ENCODE measurements at regions of chr3 and their contacts with region 1.

Region 1: GRCh38 chr3:54853573-54854404 is 74.1 kb downstream of the LRTM1 start:
- DNase-seq: peak; percentile 38
- H3K4me3 ChIP-seq: no peak overlapping the region
- H3K27ac ChIP-seq: no peak overlapping the region
- H3K4me1 ChIP-seq: no peaks in the 10 kb centered on the region
- H3K27me3 ChIP-seq: peaks cover 8% of the 10 kb centered on the region
- CTCF ChIP-seq: peak; percentile 75

Region 2: DNA sequence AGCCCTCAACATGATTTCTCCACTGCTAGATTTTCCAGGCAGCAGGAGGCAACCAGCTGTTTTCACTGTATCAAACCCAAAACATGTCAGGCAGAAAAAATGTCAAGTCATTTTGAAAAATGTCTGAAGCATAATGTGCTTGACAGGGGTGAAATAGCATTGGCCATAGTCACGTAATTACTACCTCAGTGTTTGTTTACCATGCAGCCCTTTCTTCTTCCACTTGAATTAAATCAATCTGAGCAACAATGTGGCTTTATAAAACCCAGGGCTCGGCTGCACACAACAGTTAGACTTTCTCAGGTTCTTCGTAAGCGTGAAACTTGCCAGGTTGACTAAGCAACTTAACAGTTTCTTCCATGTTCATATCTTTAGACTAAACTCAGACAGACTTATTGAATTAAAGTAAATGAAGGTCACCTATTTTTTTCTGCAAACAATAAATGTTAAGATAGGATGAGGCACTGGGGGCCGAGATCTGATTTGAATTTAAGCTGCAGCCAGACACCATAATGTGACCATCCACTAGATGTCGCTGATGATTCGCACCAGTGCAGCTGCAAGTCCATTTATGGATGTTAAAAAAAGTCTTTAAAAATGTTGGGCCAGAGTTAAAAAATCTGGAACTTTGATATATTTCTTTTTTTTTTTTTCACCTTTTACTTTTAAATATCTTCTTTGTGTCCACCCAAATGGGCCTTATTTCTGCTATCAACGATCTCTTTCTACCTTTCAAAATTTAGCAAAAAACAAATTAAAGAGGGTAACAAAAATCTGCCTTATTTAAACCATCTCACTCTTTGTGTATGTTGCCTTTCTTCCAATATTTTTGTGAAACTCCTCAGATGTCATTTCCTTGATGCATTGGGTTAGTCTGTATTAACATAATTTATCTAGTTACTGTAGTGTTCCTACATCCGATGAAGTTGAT is 425.6 kb before region 1 on chr3:
- CTCF ChIA-PET with region 1: no interaction called
- POLR2A ChIA-PET with region 1: no interaction called
- intact Hi-C with region 1: loop called (anchors 10 kb)
- DNase-seq: peak; percentile 45
- H3K4me3 ChIP-seq: no peak overlapping the region
- H3K27ac ChIP-seq: no peak overlapping the region
- H3K4me1 ChIP-seq: no peaks in the 10 kb centered on the region
- H3K27me3 ChIP-seq: no peaks in the 10 kb centered on the region
- CTCF ChIP-seq: peak; percentile 73

Region 3: DNA sequence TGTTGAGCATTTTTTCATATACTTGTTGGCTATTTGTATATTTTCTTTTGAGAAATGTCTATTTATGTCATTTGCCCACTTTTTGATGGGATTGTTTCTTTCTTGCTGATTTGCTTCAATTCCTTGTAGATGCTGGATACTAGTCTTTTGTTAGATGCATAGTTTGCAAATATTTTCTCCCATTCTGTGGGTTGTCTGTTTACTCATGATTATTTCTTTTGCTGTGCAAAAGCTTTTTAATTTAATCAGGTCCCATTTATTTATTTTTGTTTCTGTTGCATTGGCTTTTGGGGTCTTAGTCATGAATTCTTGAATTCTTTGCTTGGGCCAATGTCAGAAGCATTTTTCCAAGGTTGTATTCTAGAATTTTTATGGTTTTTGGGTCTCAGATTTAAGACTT is 381.6 kb after region 1 on chr3:
- CTCF ChIA-PET with region 1: no interaction called
- POLR2A ChIA-PET with region 1: no interaction called
- intact Hi-C with region 1: no loop called
- DNase-seq: no peak
- H3K4me3 ChIP-seq: no peak overlapping the region
- H3K27ac ChIP-seq: no peak overlapping the region
- H3K4me1 ChIP-seq: no peaks in the 10 kb centered on the region
- H3K27me3 ChIP-seq: no peaks in the 10 kb centered on the region
- CTCF ChIP-seq: no peak

Region 4: GRCh38 chr3:55897573-55898224 is 1043.9 kb after region 1 on chr3:
- CTCF ChIA-PET with region 1: no interaction called
- POLR2A ChIA-PET with region 1: no interaction called
- intact Hi-C with region 1: loop called (anchors 10 kb)
- DNase-seq: peak; percentile 21
- H3K4me3 ChIP-seq: no peak overlapping the region
- H3K27ac ChIP-seq: no peak overlapping the region
- H3K4me1 ChIP-seq: peaks cover 21% of the 10 kb centered on the region
- H3K27me3 ChIP-seq: no peaks in the 10 kb centered on the region
- CTCF ChIP-seq: peak; percentile 43

Region 5: DNA sequence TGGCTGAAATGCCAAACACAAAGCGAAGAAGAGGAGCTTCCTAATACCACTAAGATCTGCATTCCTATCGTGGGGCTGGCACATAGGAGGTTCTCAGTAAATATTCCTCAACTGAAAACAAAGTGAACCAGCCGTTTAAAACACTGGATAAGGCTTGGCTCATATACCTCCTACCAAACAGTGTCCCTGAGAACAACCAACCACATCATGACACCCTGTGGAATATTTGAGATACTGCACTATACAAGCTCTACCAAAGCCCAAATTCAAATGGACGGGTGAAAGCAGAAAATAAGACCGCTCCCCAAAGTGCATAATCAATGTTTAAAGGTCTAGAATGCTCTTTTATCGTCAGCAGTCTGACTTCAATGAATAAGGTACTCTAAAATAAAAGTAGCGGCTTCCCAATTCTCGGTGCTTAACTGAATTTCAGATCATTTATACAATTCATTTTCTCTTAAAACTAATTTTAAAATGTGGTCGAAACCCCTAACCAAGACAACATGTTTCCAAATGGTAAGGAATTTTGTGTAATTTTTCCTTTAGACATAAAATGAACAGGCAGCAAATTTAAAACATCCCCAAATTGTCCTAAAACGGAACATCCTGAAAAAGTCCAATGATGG is 1188.7 kb after region 1 on chr3:
- CTCF ChIA-PET with region 1: no interaction called
- POLR2A ChIA-PET with region 1: no interaction called
- intact Hi-C with region 1: loop called (anchors 5 kb)
- DNase-seq: peak; percentile 63
- H3K4me3 ChIP-seq: no peak overlapping the region
- H3K27ac ChIP-seq: no peak overlapping the region
- H3K4me1 ChIP-seq: peaks cover 8% of the 10 kb centered on the region
- H3K27me3 ChIP-seq: no peaks in the 10 kb centered on the region
- CTCF ChIP-seq: peak; percentile 61

Region 6: DNA sequence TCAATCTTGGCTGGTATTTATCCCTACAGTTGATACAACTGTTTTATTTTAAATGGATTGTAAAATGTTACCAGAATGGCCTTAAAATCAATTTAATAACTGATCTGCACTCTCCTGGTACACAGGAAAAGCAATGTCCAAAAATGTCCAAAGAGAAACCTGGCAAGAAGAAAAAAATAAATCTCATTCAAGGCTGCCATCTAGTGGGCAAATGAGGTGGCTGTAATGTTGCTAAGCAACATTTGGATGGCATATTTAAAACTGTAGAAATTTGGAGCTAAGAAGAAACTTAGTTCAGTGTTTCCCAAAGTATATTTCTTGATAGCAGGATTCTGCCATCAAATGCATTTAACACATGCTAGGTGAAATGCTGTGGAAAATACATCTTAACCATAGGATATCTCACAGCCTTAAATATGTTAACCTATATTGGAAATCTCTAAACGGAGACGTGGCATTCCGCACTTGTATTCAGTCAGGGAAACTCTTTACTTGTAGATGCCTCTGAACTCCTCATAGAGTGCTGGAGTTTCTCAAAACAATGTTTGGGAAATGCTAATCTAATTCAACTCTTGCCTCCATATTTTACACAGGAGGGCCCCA is 1397.7 kb after region 1 on chr3:
- CTCF ChIA-PET with region 1: no interaction called
- POLR2A ChIA-PET with region 1: no interaction called
- intact Hi-C with region 1: loop called (anchors 5 kb)
- DNase-seq: peak; percentile 41
- H3K4me3 ChIP-seq: no peak overlapping the region
- H3K27ac ChIP-seq: no peak overlapping the region
- H3K4me1 ChIP-seq: no peaks in the 10 kb centered on the region
- H3K27me3 ChIP-seq: no peaks in the 10 kb centered on the region
- CTCF ChIP-seq: peak; percentile 64

Measured in A673 (cell line).